Right ventricle myocardium superior (tissue), 1 donor: ENCODE measurements at regions of chr1 and their contacts with region 1.

Region 1: GRCh38 chr1:64268653-64269557 is 65.5 kb downstream of the UBE2U start:
- DNase-seq: peak; percentile 42
- ATAC-seq: peak; percentile 86

Region 2: DNA sequence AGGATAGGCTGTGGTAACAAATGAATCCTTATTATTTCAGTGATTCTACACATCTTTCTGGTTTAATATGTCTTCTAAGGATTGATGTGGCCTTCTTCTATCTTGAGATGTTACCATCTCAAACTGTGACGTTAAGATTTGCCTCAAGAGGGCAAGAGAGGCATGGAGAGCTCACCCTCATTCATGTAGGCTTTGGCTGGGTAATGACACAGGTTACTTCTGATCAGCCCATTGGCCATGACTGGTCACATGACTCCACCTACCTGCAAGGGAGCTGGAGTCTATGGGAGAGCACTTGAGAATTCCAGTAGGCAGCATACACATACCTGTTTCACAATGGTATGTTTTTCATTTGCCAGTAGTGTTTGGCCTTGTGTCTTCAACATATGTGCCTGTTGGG is 231.1 kb after region 1 on chr1:
- intact Hi-C with region 1: loop called (anchors 10 kb)
- DNase-seq: no peak
- ATAC-seq: no peak